H1 (cell line): ENCODE measurements at regions of chr5 and their contacts with region 1.

Region 1: DNA sequence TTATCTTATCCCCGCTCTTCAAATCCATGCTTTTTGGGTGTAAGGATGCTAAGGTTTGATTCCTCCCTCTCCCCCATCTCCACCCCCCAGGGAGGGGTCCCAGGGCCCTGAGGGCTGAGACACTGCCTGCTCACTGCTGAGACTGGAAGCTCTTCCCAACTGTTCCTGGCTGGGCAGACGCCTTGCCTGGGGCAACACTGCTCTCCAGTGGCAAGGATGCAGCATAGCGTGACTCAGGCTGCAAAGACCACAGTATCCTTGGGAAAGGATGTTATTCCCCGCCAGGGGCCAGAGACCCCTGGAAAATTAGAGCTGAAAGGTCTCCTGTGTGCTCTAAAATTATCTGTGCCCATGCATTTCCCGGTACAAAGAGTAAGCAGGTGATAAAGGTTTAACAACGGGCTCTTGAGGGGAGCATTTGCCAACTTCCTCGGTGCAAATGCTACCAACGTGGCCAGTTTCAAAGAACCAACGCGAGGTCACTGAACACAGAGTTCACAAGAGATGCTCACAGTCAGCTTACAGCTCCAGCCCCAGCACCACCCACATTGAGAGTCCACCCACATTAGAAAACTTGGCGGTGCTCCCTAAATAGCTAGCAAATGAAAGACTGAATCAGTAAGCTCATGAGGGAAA is 271.9 kb downstream of the NSG2 start:
- DNase-seq: peak in 1 of 2 experiments; percentile 66
- H3K4me3 ChIP-seq: no peak overlapping the region
- H3K27ac ChIP-seq: no peak overlapping the region
- H3K4me1 ChIP-seq: peaks cover 0 to under 1% (median 0%) of the 10 kb centered on the region in 4 experiments; a peak in 1 of 7 replicates
- H3K27me3 ChIP-seq: peaks cover 0 to 10% (median 6%) of the 10 kb centered on the region in 4 experiments; a peak in 5 of 7 replicates
- CTCF ChIP-seq: peak; percentile 93 to 97 (median 95)
- EP300 ChIP-seq: no peak
- POLR2A ChIP-seq: no peak
- RAD21 ChIP-seq: peak; percentile 99 to 100

Region 2: DNA sequence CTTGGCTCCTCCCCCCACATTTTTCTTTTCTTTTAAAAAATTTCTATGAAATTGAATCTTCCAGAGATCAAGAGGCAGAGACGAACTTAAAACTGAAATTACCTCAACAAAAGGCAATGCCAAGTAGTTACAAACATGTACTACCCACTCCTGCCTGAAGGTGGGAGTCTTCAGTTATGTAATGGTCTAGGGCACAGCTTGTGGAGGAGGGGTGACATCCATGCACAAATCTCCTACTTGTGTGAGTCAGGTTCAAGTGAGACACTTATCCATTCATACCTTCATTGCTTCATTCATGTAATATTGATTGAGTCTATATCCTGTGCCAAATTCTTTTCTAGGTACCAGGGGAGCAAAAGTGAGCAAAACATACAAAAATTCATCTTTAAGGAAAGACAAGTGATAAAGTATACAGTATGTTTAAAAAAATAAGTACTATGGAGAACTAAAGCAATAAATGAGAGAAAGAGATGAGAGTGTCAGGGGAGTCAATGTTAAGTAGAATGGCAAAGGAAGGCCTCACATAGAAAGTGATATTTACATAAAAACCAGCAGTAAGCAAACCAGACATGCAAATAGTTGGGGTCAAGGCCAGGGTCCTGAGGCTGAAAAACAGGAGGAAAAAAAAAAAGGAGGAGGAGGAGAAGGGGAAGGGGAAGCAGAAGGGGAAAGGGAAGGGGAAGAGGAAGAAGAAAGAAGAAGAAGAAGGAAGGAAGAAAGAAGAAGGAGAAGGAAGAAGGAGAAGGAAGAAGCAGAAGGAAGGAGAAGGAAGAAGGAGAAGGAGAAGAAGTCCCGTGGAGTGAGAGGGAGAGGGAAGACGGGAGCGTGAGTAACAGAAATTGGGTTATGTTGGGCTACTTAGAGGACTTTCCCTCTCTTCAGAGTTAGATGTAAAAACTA is 296.7 kb before region 1 on chr5:
- CTCF ChIA-PET with region 1: interaction called, 13 read pairs
- POLR2A ChIA-PET with region 1: interaction called, 3 read pairs
- DNase-seq: peak; percentile 15 to 72
- H3K4me3 ChIP-seq: peak overlapping the region in 1 of 4 experiments; percentile 32; a peak in 1 of 8 replicates
- H3K27ac ChIP-seq: no peak overlapping the region
- H3K4me1 ChIP-seq: no peaks in the 10 kb centered on the region; a peak in 3 of 7 replicates
- H3K27me3 ChIP-seq: no peaks in the 10 kb centered on the region
- CTCF ChIP-seq: peak; percentile 27 to 81 (median 60)
- EP300 ChIP-seq: no peak
- POLR2A ChIP-seq: no peak
- RAD21 ChIP-seq: peak; percentile 90 to 91

Region 3: DNA sequence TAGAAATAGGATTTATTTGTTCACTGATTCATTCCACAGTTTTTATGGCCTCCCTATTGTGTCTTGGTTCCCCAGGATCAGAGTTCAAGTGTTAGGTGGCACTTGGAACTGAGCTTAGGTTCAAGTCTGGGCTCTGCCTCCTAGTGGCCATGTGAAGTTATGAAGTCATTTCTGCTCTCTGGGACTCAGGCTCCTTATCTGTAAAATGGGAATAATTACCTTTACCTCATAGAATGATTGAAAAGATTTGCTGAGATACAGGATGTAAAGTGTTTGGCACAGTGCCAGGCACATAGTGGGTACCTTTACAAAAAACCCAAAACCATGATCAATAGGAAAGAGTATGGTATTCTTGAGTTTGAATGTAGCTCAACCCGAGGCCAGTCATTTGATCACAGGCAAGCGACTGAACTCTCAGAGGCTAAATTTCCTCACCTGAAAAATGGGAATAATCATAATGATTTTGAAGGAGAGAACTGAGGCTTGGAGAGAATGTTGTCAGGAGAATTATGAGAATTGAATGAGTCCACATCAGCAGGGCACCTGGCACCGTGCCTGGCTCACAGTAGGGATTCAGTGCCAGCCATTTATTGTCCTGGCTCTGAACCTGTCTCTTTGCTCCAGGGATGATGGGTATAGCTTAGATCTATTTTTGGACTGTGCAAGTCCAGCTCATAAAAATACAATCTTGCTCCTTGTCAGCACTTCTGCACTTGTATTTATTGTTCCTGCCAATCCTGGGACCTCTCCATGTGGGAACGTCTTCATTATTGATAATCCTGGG is 261.1 kb before region 1 on chr5:
- CTCF ChIA-PET with region 1: interaction called, 174 read pairs
- POLR2A ChIA-PET with region 1: no interaction called
- DNase-seq: no peak
- H3K4me3 ChIP-seq: no peak overlapping the region
- H3K27ac ChIP-seq: no peak overlapping the region
- H3K4me1 ChIP-seq: no peaks in the 10 kb centered on the region
- H3K27me3 ChIP-seq: no peaks in the 10 kb centered on the region
- CTCF ChIP-seq: peak in 1 of 3 experiments; percentile 40; a peak in 2 of 4 replicates
- EP300 ChIP-seq: no peak
- POLR2A ChIP-seq: no peak
- RAD21 ChIP-seq: peak; percentile 9 to 30; a peak in 2 of 4 replicates

Region 4: GRCh38 chr5:174300941-174301761 is 16.2 kb before region 1 on chr5:
- CTCF ChIA-PET with region 1: interaction called, 22 read pairs
- POLR2A ChIA-PET with region 1: interaction called, 3 read pairs
- DNase-seq: peak in 1 of 2 experiments; percentile 44
- H3K4me3 ChIP-seq: 0 out of 8 replicates have a peak overlapping the region, but pooled peaks of 1 of the 4 experiments have one; percentile 8
- H3K27ac ChIP-seq: no peak overlapping the region
- H3K4me1 ChIP-seq: peaks cover 2 to 12% (median 8%) of the 10 kb centered on the region in 4 experiments; a peak in 5 of 7 replicates
- H3K27me3 ChIP-seq: peaks cover 0 to 3% (median 1%) of the 10 kb centered on the region in 4 experiments; a peak in 1 of 7 replicates
- CTCF ChIP-seq: no peak
- EP300 ChIP-seq: no peak
- POLR2A ChIP-seq: no peak
- RAD21 ChIP-seq: no peak